ENCODE measurements at regions of chr12 and their contacts with region 1.

Region 1: GRCh38 chr12:6858799-6859198 is 6.8 kb downstream of the USP5 start:
- DNase-seq: no peak
- ATAC-seq: no peak
- H3K4me3 Mint-ChIP-seq: no peak overlapping the region
- H3K27ac Mint-ChIP-seq: no peak overlapping the region
- H3K4me1 Mint-ChIP-seq: peaks cover 5% of the 10 kb centered on the region
- H3K27me3 Mint-ChIP-seq: no peaks in the 10 kb centered on the region

Region 2: DNA sequence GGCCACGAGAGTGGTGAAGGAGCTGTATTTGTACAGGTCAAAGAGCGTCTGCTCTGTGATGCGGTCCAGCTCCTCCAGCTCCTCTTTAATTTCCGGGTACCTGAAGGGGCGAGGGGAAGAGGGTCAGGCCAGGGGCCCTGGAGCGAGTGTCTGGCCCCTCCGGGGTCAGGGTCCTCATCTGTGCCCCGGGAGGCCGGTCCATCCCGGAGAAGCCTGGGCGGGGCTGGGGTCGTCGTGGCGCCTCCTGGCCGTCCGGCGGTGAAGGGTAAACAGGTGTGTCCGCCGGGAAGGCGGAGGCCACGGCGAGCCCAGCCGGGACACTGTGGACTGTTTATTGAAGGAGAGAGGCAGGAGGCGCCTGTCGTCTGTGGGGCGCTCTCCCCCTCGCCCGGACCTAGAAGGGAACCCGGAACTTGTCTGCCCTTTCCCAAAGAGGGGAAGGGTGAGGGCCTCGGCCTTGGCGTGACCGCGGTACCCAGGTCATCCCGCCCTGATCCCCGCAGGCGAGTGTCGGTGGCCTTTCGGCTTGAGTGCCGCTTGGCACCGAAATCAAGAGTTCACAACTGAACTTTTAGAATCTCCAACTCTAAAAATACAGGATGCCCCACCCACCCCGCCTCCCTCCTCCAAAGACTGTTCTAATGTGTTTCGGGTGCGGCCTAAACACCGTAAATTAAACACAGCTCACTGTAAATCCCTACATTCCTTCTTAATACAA is 495.0 kb before region 1 on chr12:
- CTCF ChIA-PET with region 1: no interaction called
- POLR2A ChIA-PET with region 1: no interaction called
- intact Hi-C with region 1: no loop called
- DNase-seq: peak; percentile 52
- ATAC-seq: peak; percentile 18
- H3K4me3 Mint-ChIP-seq: peak overlapping the region; percentile 68
- H3K27ac Mint-ChIP-seq: peak overlapping the region; percentile 63
- H3K4me1 Mint-ChIP-seq: peaks cover 44% of the 10 kb centered on the region
- H3K27me3 Mint-ChIP-seq: no peaks in the 10 kb centered on the region

Region 3: GRCh38 chr12:6376079-6376869 is 482.5 kb before region 1 on chr12:
- CTCF ChIA-PET with region 1: no interaction called
- POLR2A ChIA-PET with region 1: interaction called, 10 read pairs
- intact Hi-C with region 1: no loop called
- DNase-seq: peak; percentile 34
- ATAC-seq: peak; percentile 38
- H3K4me3 Mint-ChIP-seq: no peak overlapping the region
- H3K27ac Mint-ChIP-seq: peak overlapping the region; percentile 75
- H3K4me1 Mint-ChIP-seq: peaks cover 26% of the 10 kb centered on the region
- H3K27me3 Mint-ChIP-seq: peaks cover 4% of the 10 kb centered on the region

Measured in activated CD4-positive, alpha-beta T cell treated with anti-CD3 and anti-CD28 coated beads for 36 hours (primary cell).